A549 (cell line): ENCODE measurements at regions of chr2 and their contacts with region 1.

Region 1: DNA sequence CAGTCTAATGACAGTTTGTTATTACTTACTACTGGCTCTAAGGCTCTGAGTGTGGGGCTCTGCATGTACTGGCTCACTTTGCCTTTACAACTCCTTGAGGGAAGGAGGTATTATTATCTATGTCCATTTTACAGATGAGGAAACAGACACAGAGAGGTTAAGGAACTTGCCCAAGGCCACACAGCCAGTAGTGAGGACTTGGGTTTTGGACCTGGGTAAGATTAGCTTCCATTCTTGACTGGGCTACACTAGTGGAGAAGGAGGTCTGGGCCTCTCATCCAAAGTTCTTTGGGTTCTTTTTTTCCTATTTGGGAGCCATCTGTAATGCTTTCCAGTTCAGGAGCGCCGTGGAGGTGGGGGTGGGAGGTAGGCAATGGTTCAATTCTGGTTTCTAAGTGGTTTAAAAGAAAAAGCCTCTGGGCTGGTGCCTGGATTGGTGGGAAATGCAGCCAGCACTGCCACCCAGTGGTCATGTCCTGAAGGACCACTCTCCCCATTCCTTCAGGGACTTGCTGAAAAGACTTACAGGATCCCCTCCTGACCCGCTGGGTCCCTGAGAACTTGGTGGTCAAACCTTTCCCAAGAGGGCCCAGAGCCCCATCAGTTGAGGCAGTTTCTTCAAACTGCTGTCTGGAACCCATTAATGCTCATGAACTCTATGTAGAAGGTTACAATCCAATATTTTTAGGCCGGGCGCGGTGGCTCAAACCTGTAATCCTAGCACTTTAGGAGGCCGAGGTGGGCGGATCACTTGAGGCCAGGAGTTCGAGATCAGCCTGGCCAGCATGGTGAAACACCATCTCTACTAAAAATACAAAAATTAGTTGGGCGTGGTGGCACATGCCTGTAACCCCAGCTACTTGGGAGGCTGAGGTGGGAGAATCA is 38.6 kb upstream of the NOTO start:
- DNase-seq: peak; percentile 82 to 88
- ATAC-seq: peak; percentile 94 to 99
- H3K4me3 ChIP-seq: no peak overlapping the region
- H3K27ac ChIP-seq: no peak overlapping the region
- H3K4me1 ChIP-seq: no peaks in the 10 kb centered on the region
- CTCF ChIP-seq: peak; percentile 96
- EP300 ChIP-seq: no peak
- POLR2A ChIP-seq: no peak
- RAD21 ChIP-seq: peak; percentile 95 to 96

Region 2: DNA sequence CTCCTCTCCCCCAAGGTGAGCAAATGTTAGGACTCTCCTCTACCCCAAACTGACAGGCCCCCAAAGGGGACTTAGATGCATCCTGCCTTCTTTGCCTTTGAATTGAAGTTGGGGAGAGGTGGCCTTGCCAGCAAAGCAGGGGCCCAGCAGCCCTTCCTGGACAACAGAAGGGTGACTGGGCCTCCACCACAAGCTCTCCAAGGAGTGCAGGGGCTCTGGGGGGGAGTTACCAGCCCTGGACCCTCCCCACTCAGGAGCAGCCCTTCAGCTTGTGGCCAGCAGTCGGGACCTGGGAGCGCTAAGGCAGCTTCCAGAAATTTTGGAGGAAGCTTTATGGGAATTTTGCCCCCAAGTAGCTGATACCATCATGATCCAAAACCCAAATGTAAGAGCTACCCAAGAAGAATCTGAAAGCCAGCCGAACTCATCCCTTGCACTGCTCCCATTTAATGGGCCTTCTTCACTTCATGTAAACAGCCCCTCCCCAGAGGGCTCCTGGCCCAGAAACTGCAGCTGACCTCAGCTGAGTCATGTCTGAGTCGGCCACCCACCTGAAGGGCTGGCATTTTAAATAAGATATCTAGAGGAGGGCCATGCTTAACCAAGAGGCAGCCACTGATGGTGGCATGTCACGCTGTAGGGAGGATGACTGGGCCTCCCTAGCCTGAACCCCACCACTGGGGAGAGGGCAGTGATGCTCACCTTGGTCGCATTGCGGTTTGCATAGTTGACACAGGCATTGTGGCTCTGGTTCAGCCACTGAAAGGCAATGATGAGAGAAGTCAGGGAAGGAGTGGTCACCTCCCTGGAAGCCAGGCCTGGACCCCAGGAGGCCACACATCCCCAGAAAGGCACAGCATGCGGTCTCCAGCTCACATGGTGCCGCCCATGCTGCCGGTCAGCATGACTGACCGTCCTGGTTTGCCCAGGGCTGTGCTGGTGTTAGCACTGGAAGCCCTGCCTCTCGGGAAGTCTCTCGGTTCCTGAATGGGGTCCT is 163.7 kb before region 1 on chr2:
- CTCF ChIA-PET with region 1: interaction called, 96 read pairs
- POLR2A ChIA-PET with region 1: no interaction called
- DNase-seq: no peak
- ATAC-seq: peak in 1 of 2 experiments; percentile 28; a peak in 1 of 6 replicates
- H3K4me3 ChIP-seq: no peak overlapping the region
- H3K27ac ChIP-seq: peak overlapping the region in 1 of 2 experiments; percentile 47; a peak in 2 of 6 replicates
- H3K4me1 ChIP-seq: peaks cover 18% of the 10 kb centered on the region
- CTCF ChIP-seq: no peak
- EP300 ChIP-seq: no peak
- POLR2A ChIP-seq: no peak
- RAD21 ChIP-seq: no peak

Region 3: GRCh38 chr2:73091164-73091563 is 72.6 kb before region 1 on chr2:
- CTCF ChIA-PET with region 1: interaction called, 500 read pairs
- POLR2A ChIA-PET with region 1: no interaction called
- DNase-seq: no peak
- ATAC-seq: no peak
- H3K4me3 ChIP-seq: no peak overlapping the region
- H3K27ac ChIP-seq: no peak overlapping the region
- H3K4me1 ChIP-seq: peaks cover 18% of the 10 kb centered on the region
- CTCF ChIP-seq: no peak
- EP300 ChIP-seq: no peak
- POLR2A ChIP-seq: no peak
- RAD21 ChIP-seq: no peak

Region 4: DNA sequence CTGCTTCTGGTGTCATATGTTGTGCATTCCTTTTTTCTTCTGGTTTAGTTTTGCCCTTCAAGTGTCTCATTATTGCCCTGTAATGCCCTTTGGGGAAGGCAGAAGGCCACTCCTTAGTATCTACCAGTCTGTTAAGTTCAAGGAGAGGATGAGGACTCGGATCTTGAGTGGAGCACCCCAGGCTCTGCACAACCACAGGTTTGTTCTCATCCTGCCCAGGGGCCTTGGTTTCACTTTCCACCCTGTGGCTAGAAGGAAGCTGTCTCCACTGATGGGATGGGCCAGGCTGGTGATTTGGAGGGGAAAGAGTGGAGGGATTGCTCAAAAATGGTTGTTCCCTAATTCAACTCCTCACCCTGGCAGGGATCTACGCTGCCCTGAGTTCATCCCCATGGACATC is 20.8 kb before region 1 on chr2:
- CTCF ChIA-PET with region 1: interaction called, 10 read pairs
- POLR2A ChIA-PET with region 1: no interaction called
- DNase-seq: no peak
- ATAC-seq: no peak
- H3K4me3 ChIP-seq: no peak overlapping the region
- H3K27ac ChIP-seq: no peak overlapping the region
- H3K4me1 ChIP-seq: no peaks in the 10 kb centered on the region
- CTCF ChIP-seq: no peak
- EP300 ChIP-seq: no peak
- POLR2A ChIP-seq: no peak
- RAD21 ChIP-seq: no peak